CD4-positive, alpha-beta T cell (primary cell): ENCODE measurements at regions of chr11 and their contacts with region 1.

Region 1: DNA sequence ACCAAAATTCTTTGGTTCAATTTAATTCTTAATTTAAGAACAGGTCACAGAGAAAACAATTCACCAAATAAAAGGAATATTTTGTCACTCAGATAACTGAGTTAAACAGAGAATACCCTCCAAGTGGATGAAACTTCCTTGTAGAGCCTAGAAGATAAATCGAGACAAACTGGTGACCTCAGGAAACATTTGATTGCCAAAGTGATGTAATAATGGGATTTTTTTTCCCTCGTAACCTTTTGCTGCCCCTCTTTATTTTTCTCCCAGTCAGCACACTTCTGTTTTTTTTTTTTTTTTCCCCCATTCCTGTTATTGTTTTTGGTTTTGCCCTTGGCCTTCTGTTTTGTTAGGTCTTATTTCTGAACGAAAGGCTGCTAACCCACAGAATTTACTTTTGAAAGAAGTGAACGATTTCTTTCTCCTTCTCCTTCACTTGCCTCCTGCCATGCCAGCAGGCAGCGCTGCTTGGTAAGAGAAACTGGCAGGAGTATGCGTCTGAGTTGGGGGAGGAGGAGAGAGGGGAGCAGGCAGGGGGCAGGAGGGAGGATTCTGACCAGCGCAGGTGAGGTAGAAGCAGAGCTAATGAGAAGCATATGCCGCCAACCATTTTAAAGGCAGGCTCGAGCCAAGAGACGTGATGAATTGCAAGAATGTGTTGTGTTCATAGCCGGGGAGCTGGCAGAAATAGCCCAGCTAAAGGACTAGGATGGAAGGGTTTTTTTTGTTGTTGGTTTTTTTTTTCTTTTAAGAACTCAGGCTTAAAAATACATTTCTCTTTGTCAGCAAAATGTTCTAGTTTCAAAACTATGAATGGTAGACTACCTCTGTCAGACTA is 121.9 kb upstream of the MTMR2 start:
- DNase-seq: no peak
- ATAC-seq: no peak
- H3K4me3 ChIP-seq: no peak overlapping the region
- H3K4me3 Mint-ChIP-seq: no peak overlapping the region
- H3K27ac ChIP-seq: no peak overlapping the region
- H3K27ac Mint-ChIP-seq: peak overlapping the region; percentile 12
- H3K4me1 ChIP-seq: no peaks in the 10 kb centered on the region
- H3K4me1 Mint-ChIP-seq: peaks cover 65% of the 10 kb centered on the region
- H3K27me3 ChIP-seq: no peaks in the 10 kb centered on the region
- H3K27me3 Mint-ChIP-seq: no peaks in the 10 kb centered on the region
- CTCF ChIP-seq: no peak

Region 2: DNA sequence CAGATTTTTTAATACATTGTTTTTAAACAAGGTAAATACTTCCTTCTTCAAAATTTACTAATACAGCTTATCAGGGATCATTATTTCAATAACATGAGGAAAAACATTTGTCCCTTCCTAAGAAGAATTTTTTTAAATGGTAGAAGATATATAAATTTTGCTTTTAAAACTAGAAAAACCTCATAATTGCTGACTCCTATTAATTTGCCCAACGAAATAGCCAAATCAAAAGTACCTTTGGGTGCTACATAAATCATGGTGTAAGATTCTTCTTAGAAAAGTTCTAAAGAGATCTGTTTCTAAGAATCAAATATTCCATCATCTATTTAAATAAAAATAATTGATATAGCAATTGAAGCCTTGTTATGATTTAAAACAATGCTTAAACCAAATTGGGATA is 200.7 kb before region 1 on chr11:
- CTCF ChIA-PET with region 1: no interaction called
- POLR2A ChIA-PET with region 1: no interaction called
- intact Hi-C with region 1: no loop called
- DNase-seq: no peak
- ATAC-seq: no peak
- H3K4me3 ChIP-seq: no peak overlapping the region
- H3K4me3 Mint-ChIP-seq: no peak overlapping the region
- H3K27ac ChIP-seq: no peak overlapping the region
- H3K27ac Mint-ChIP-seq: no peak overlapping the region
- H3K4me1 ChIP-seq: no peaks in the 10 kb centered on the region
- H3K4me1 Mint-ChIP-seq: no peaks in the 10 kb centered on the region
- H3K27me3 ChIP-seq: no peaks in the 10 kb centered on the region
- H3K27me3 Mint-ChIP-seq: no peaks in the 10 kb centered on the region
- CTCF ChIP-seq: no peak

Region 3: GRCh38 chr11:95863486-95864140 is 182.2 kb before region 1 on chr11:
- CTCF ChIA-PET with region 1: no interaction called
- POLR2A ChIA-PET with region 1: no interaction called
- intact Hi-C with region 1: loop called in 1 of 2 experiments (anchors 5 kb)
- DNase-seq: no peak
- ATAC-seq: no peak
- H3K4me3 ChIP-seq: no peak overlapping the region
- H3K4me3 Mint-ChIP-seq: no peak overlapping the region
- H3K27ac ChIP-seq: no peak overlapping the region
- H3K27ac Mint-ChIP-seq: no peak overlapping the region
- H3K4me1 ChIP-seq: no peaks in the 10 kb centered on the region
- H3K4me1 Mint-ChIP-seq: no peaks in the 10 kb centered on the region
- H3K27me3 ChIP-seq: no peaks in the 10 kb centered on the region
- H3K27me3 Mint-ChIP-seq: no peaks in the 10 kb centered on the region
- CTCF ChIP-seq: no peak